AG04449 (cell line): ENCODE measurements at regions of chr17 and their contacts with region 1.

Region 1: DNA sequence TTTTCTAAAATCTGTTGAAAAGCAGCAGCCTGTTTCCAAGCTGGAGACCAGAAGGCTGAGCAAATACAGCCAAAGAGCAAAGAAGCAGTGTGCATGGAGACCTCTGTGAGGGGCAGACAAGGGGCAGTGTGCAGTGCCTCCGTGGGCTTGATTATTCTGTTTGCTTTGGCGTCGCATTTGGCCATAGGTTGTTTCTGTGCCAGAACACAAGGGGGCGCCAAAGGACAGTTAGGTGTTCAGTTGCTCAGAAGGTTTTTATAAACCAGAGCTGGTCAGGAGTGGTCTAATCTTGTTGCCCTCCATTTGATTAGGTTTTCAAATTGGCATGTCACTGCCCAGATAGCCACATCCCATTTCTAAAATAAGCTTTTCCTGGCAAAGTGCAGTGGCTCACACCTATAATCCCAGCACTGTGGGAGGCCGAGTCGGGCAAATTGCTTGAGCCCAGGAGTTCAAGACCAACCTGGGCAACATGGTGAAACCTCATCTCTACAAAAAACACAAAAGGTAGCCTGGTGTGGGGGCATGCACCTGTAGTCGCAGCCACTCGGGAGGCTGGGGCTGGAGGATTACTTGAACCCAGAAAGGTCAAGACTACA is 10.6 kb downstream of the MYH3 start:
- DNase-seq: peak; percentile 5
- H3K4me3 ChIP-seq: no peak overlapping the region
- CTCF ChIP-seq: peak; percentile 90

Region 2: DNA sequence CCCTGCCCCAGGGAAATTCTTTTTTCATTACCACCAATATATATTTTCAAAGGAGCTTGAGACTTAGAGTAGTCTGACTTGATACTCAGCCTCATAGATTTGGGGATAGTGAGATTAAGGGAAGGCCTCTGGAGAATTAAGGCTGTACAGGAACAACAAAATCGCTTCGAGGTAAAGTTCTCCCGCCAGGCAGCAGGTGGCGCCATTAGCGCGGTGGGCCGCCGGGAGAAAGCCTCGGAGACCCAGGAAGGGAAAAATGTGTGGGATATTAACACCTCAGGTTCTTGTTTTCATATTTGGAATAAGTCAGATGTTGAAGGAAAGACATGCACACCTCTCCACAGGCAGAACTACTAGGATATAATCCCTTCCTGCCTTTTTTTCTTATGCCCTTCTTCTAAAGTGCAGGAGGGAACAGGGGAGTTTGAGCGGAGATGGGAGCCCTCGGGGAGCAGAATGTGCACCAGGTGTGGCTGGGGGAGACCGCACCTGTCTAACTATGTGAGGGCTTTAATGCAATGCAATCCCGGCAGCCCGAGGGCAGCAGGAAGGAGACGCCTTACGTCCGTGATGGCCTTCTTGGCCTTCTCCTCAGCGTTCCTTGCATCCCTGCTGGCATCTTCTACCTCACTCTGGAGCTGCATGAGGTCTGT is 15.3 kb before region 1 on chr17:
- CTCF ChIA-PET with region 1: interaction called, 204 read pairs
- POLR2A ChIA-PET with region 1: no interaction called
- DNase-seq: no peak
- H3K4me3 ChIP-seq: no peak overlapping the region
- CTCF ChIP-seq: peak; percentile 82

Region 3: GRCh38 chr17:10668771-10669170 is 22.3 kb after region 1 on chr17:
- CTCF ChIA-PET with region 1: interaction called, 27 read pairs
- POLR2A ChIA-PET with region 1: no interaction called
- DNase-seq: peak; percentile 36
- H3K4me3 ChIP-seq: no peak overlapping the region
- CTCF ChIP-seq: no peak

Region 4: DNA sequence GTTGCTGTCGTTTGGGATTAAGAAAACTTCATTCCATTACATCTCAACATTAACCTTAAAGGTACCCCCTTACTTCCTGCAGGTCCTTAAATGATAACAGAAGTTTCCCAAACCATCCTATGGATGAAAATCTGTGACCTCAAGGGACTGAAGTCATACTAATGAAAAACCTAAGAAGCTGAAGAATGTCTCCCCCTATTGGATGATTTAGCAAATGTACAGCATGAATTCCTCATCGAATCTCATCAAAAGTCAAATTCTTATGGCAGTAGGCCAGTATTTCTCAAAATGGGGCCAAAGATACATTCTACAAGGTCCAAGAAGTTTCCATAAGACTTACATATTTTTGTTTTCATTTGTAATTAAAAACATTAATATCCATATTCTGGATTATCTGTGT is 37.4 kb after region 1 on chr17:
- CTCF ChIA-PET with region 1: interaction called, 177 read pairs
- POLR2A ChIA-PET with region 1: no interaction called
- DNase-seq: no peak
- H3K4me3 ChIP-seq: no peak overlapping the region
- CTCF ChIP-seq: peak; percentile 27

Region 5: GRCh38 chr17:10702574-10702973 is 56.1 kb after region 1 on chr17:
- CTCF ChIA-PET with region 1: interaction called, 21 read pairs
- POLR2A ChIA-PET with region 1: no interaction called
- DNase-seq: no peak
- H3K4me3 ChIP-seq: no peak overlapping the region
- CTCF ChIP-seq: no peak

Region 6: GRCh38 chr17:10737168-10737622 is 90.7 kb after region 1 on chr17:
- CTCF ChIA-PET with region 1: interaction called, 45 read pairs
- POLR2A ChIA-PET with region 1: no interaction called
- DNase-seq: no peak
- H3K4me3 ChIP-seq: no peak overlapping the region
- CTCF ChIP-seq: peak; percentile 77